Activated naive CD4-positive, alpha-beta T cell treated with anti-CD3 and anti-CD28 coated beads for 36 hours (primary cell): ENCODE measurements at regions of chr2 and their contacts with region 1.

Region 1: DNA sequence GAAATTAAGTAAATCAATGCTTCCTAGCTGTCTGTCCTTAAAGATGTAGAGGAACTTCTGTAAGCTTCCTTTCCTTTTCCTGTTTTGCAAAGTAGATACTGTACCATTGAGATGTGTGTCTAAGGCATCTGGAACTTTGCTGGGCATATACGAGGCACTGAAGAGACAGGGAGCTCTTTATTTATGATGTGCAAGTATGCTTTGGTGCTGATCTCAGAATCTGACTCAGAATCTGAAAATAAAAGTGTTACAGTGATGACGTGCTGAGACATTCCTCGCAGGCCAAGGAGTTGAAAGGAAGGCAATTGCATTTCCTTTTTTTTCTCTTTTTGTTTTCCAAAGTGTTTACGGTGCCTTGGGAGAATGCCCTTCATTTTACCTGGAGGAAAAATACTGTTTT is 230.9 kb upstream of the RGPD4 start:
- DNase-seq: no peak
- H3K4me3 Mint-ChIP-seq: no peak overlapping the region
- H3K27ac Mint-ChIP-seq: no peak overlapping the region
- H3K4me1 Mint-ChIP-seq: no peaks in the 10 kb centered on the region
- H3K27me3 Mint-ChIP-seq: no peaks in the 10 kb centered on the region

Region 2: DNA sequence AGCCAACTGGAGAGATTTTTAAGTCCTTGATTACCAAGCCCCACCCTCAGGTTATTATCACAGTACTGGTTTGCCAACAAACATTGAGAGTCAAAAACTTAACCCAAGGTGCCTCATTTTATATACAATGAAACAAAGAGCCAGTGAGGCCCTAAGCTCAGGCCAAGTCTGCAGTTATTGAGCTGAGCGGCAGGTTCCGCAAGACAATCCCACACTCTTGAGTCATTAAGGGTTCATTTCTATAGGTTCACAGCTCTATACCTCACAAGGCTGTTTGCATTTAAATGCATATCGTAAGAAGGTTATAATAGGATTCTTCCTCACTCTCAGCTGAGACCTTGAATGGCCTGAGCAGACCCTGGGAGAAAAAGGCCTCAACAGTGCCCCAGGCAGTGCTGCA is 37.5 kb before region 1 on chr2:
- CTCF ChIA-PET with region 1: interaction called, 3 read pairs
- intact Hi-C with region 1: loop called (anchors 1 kb)
- DNase-seq: no peak
- H3K4me3 Mint-ChIP-seq: no peak overlapping the region
- H3K27ac Mint-ChIP-seq: no peak overlapping the region
- H3K4me1 Mint-ChIP-seq: no peaks in the 10 kb centered on the region
- H3K27me3 Mint-ChIP-seq: no peaks in the 10 kb centered on the region

Region 3: GRCh38 chr2:107645586-107645985 is 49.8 kb after region 1 on chr2:
- CTCF ChIA-PET with region 1: no interaction called
- intact Hi-C with region 1: no loop called
- DNase-seq: no peak
- H3K4me3 Mint-ChIP-seq: no peak overlapping the region
- H3K27ac Mint-ChIP-seq: no peak overlapping the region
- H3K4me1 Mint-ChIP-seq: no peaks in the 10 kb centered on the region
- H3K27me3 Mint-ChIP-seq: no peaks in the 10 kb centered on the region